HepG2 (cell line): ENCODE measurements at regions of chr5 and their contacts with region 1.

Region 1: DNA sequence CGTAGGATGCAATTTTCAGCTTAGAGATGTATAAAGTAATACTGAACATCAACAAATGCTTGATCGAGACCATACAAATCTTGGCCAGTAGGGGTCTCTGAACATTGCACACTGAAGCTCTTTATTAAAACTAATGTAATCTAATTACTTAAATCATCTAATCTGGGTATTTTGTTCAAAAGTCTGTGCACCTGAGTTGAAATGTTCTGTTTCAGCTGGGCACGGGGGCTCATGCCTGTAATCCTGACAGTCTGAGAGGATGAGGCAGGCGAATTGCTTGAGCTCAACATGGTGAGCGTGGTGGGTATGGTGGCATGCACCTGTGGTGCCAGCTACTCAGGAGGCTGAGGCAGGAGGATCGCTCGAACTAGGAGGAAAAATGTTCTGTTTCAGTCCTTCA is 41.0 kb downstream of the ESM1 start:
- DNase-seq: no peak
- ATAC-seq: peak; percentile 53; the same call in 2 of the 3 replicates
- H3K4me3 ChIP-seq: no peak overlapping the region
- H3K27ac ChIP-seq: no peak overlapping the region
- H3K4me1 ChIP-seq: no peaks in the 10 kb centered on the region
- H3K27me3 ChIP-seq: no peaks in the 10 kb centered on the region
- CTCF ChIP-seq: peak; percentile 42
- EP300 ChIP-seq: no peak
- POLR2A ChIP-seq: no peak
- RAD21 ChIP-seq: no peak

Region 2: GRCh38 chr5:54985301-54986268 is 41.2 kb after region 1 on chr5 and contains the start of gene ESM1:
- CTCF ChIA-PET with region 1: no interaction called
- POLR2A ChIA-PET with region 1: no interaction called
- in situ Hi-C with region 1: no loop called
- intact Hi-C with region 1: no loop called
- DNase-seq: no peak
- ATAC-seq: peak; percentile 87
- H3K4me3 ChIP-seq: no peak within 1 kb of the TSS
- H3K27ac ChIP-seq: no peak within 1 kb of the TSS
- H3K4me1 ChIP-seq: no peaks in the 10 kb centered on the region
- H3K27me3 ChIP-seq: peaks cover 3 to 21% of the 10 kb centered on the region in 2 experiments
- CTCF ChIP-seq: no peak
- EP300 ChIP-seq: no peak
- POLR2A ChIP-seq: no peak
- RAD21 ChIP-seq: no peak
- total RNA-seq, gene ESM1: not detected in 2 replicates

Region 3: DNA sequence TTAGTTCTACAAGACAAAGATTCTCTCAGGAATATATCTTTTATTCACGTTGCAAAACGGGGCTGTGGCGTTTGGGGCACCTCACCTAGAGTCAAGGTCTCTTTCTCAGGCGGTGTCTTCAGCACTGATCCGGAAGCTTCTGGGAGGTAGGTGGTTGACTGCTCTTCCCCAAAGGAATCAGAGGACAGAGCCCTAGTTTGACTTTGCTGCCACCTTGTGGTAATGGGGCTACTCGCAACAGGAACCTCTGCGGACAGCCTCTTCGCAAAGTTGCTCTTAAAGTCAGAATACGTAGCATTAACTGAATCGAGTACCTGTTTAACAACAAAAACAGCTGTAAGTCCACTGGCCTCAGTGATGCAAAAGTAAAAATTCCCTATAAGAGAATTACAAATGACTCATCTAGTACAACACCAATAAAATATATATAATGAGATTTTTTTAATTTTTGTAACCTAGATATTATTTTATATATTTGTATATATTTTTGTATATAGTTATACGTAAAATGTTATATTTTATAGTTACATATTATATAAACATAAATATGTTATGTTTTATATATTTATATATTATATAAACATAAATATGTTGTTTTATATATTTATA is 202.3 kb after region 1 on chr5:
- CTCF ChIA-PET with region 1: interaction called, 9 read pairs
- POLR2A ChIA-PET with region 1: no interaction called
- in situ Hi-C with region 1: loop called (anchors 10 kb)
- intact Hi-C with region 1: loop called (anchors 1 kb)
- DNase-seq: peak; percentile 71
- ATAC-seq: peak; percentile 94
- H3K4me3 ChIP-seq: no peak overlapping the region
- H3K27ac ChIP-seq: no peak overlapping the region
- H3K4me1 ChIP-seq: no peaks in the 10 kb centered on the region
- H3K27me3 ChIP-seq: peaks cover 1 to 6% of the 10 kb centered on the region in 2 experiments; a peak in 2 of 5 replicates
- CTCF ChIP-seq: peak; percentile 91
- EP300 ChIP-seq: no peak
- POLR2A ChIP-seq: no peak
- RAD21 ChIP-seq: peak; percentile 79